ENCODE measurements at regions of chrX and their contacts with region 1.

Region 1: GRCh38 chrX:65581661-65582339 is 47.2 kb upstream of the LAS1L start:
- DNase-seq: peak; percentile 43 to 86
- H3K4me3 ChIP-seq: no peak overlapping the region
- CTCF ChIP-seq: no peak
- POLR2A ChIP-seq: no peak

Region 2: DNA sequence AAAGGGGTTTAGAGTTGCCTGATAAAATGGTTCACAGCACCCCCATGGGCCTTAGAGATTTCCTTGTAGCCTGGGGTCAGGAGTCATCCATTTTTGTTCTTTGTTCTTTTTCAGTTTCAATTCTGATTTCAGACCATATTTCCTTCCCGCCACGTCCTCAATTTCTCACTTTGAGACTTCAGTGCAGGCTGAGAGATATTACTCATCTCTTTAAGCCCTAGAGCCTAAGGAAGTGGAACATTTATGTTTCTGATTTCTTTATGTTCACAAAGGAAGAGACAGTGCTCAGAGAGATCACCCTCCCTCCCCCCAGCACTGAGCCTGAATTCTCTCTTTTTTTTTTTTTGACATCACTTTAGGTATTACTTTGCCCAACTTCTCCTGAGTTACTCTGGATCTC is 141.9 kb after region 1 on chrX:
- intact Hi-C with region 1: loop called (anchors 10 kb)
- DNase-seq: no peak
- H3K4me3 ChIP-seq: no peak overlapping the region
- CTCF ChIP-seq: no peak
- POLR2A ChIP-seq: no peak

Measured in lower leg skin (tissue), 4 donors.